H1 (cell line): ENCODE measurements at regions of chr3 and their contacts with region 1.

Region 1: GRCh38 chr3:177197041-177197727 is at the start of gene TBL1XR1:
- DNase-seq: peak; percentile 67 to 87
- H3K4me3 ChIP-seq: peak within 1 kb of the TSS; percentile 94 to 100 (median 98)
- H3K27ac ChIP-seq: peak within 1 kb of the TSS; percentile 97
- H3K4me1 ChIP-seq: peaks cover 5 to 28% (median 15%) of the 10 kb centered on the region in 4 experiments; a peak in 5 of 7 replicates
- H3K27me3 ChIP-seq: no peaks in the 10 kb centered on the region
- CTCF ChIP-seq: no peak
- EP300 ChIP-seq: peak in 1 of 2 experiments; percentile 48; a peak in 1 of 3 replicates
- POLR2A ChIP-seq: peak; percentile 24 to 75; a peak in 2 of 3 replicates
- RAD21 ChIP-seq: peak in 1 of 2 experiments; percentile 30; a peak in 2 of 4 replicates
- total RNA-seq, gene TBL1XR1: 138 and 147 TPM in 2 replicates

Region 2: GRCh38 chr3:177174607-177175170 is 22.5 kb before region 1 on chr3:
- CTCF ChIA-PET with region 1: interaction called, 3 read pairs
- POLR2A ChIA-PET with region 1: interaction called, 11 read pairs
- DNase-seq: no peak
- H3K4me3 ChIP-seq: no peak overlapping the region
- H3K27ac ChIP-seq: no peak overlapping the region
- H3K4me1 ChIP-seq: peaks cover 4 to 17% (median 15%) of the 10 kb centered on the region in 4 experiments; a peak in 6 of 7 replicates
- H3K27me3 ChIP-seq: no peaks in the 10 kb centered on the region
- CTCF ChIP-seq: no peak
- EP300 ChIP-seq: no peak
- POLR2A ChIP-seq: no peak
- RAD21 ChIP-seq: no peak

Region 3: GRCh38 chr3:177185035-177185574 is 12.1 kb before region 1 on chr3:
- CTCF ChIA-PET with region 1: interaction called, 4 read pairs
- POLR2A ChIA-PET with region 1: interaction called, 19 read pairs
- DNase-seq: no peak
- H3K4me3 ChIP-seq: no peak overlapping the region
- H3K27ac ChIP-seq: no peak overlapping the region
- H3K4me1 ChIP-seq: peaks cover 0 to 2% (median under 1%) of the 10 kb centered on the region in 4 experiments; a peak in 3 of 7 replicates
- H3K27me3 ChIP-seq: no peaks in the 10 kb centered on the region
- CTCF ChIP-seq: no peak
- EP300 ChIP-seq: no peak
- POLR2A ChIP-seq: no peak
- RAD21 ChIP-seq: no peak

Region 4: DNA sequence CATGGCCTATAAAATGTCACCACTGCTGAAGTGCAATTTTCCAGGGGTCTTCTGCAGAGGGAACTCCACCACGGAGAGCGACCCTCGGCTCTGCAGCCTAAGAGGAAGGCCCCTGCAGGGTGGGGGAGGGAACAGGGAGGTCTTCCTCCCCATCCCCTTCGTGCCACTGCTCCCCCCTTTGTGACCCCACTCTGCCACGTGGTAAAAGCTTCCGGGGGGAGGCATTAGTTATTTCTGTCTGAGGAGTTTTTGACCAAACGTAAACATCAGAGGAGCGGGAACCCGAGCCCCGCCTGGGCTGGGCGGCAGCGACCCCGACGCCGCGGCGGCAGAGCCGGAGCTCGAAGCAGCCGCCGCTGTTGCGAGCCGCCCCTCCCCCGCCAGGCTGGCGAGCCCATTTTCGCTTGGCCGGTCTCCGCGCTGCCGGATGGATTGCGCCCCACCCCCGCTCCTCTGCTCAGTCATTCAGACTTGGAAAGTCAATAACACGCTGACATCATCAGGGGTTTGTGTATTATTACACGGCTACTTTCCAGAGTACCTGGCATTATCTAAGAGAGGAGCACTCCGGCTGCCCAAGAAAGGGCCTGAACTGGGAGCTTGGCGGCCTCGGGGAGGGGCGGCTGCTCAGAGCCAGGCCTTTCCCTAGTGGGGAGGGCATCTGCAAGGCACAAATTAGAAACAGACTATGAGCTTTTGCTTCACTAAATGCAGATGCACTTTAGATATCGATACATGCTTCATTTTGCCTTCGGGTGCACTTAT is 162.6 kb after region 1 on chr3:
- CTCF ChIA-PET with region 1: interaction called, 4 read pairs
- POLR2A ChIA-PET with region 1: interaction called, 82 read pairs
- DNase-seq: peak; percentile 85 to 98
- H3K4me3 ChIP-seq: peak overlapping the region; percentile 6 to 56 (median 31); a peak in 6 of 8 replicates
- H3K27ac ChIP-seq: peak overlapping the region; percentile 86
- H3K4me1 ChIP-seq: peaks cover 10 to 33% (median 20%) of the 10 kb centered on the region in 4 experiments
- H3K27me3 ChIP-seq: no peaks in the 10 kb centered on the region; a peak in 1 of 7 replicates
- CTCF ChIP-seq: 0 out of 4 replicates have a peak, but pooled peaks of 1 of the 3 experiments have one; percentile 0
- EP300 ChIP-seq: peak; percentile 73 to 99
- POLR2A ChIP-seq: peak; percentile 17 to 46
- RAD21 ChIP-seq: peak; percentile 57 to 68